Activated CD8-positive, alpha-beta memory T cell treated with anti-CD3 and anti-CD28 coated beads, Interleukin-2, amount 10 ng/mL, durations not matched to agents 7 days and 5 days (primary cell): ENCODE measurements at regions of chr11 and their contacts with region 1.

Region 1: GRCh38 chr11:6362873-6363678 is 27.2 kb upstream of the SMPD1 start:
- DNase-seq: peak; percentile 83
- ATAC-seq: peak; percentile 91
- H3K4me3 Mint-ChIP-seq: no peak overlapping the region
- H3K27ac Mint-ChIP-seq: no peak overlapping the region
- H3K4me1 Mint-ChIP-seq: no peaks in the 10 kb centered on the region
- H3K27me3 Mint-ChIP-seq: no peaks in the 10 kb centered on the region

Region 2: GRCh38 chr11:6234387-6235107 is 128.5 kb before region 1 on chr11 and contains the start of gene FHIP1B:
- CTCF ChIA-PET with region 1: interaction called, 10 read pairs
- DNase-seq: peak; percentile 100
- ATAC-seq: peak; percentile 94
- H3K4me3 Mint-ChIP-seq: peak within 1 kb of the TSS; percentile 92
- H3K27ac Mint-ChIP-seq: peak within 1 kb of the TSS; percentile 95
- H3K4me1 Mint-ChIP-seq: peaks cover 38% of the 10 kb centered on the region
- H3K27me3 Mint-ChIP-seq: no peaks in the 10 kb centered on the region
- total RNA-seq, gene FHIP1B: 17.3 to 19.9 TPM

Region 3: DNA sequence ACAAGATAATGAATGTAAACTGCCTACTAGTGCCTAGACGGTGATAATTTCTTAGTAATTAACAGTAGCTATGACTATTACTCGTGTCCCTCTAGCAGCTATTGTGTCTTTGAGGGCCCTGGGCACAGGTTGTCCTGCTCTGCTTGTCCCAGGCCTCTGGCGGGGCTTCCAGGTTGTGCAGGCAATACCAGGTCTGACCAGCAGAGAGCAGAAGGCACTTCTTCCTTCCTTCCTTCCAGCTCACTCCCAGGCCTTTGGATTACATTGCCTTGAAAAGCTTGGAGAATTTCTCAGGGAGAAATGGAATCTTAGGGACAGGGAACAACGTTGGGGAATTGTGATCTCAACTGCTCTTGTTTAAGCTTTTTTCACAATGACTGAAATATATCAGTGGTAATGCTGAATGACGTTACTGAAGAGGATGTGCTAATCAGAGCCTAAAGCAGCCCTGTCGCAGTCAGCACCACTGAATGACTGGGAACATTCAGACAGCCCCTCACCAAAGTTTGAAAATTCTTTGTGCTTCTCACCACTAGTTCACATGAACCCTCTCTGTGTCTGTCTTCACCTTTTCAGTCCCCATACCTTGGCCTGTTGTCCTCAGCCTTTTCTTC is 111.8 kb before region 1 on chr11:
- CTCF ChIA-PET with region 1: interaction called, 40 read pairs
- DNase-seq: peak; percentile 68
- ATAC-seq: peak; percentile 61
- H3K4me3 Mint-ChIP-seq: no peak overlapping the region
- H3K27ac Mint-ChIP-seq: no peak overlapping the region
- H3K4me1 Mint-ChIP-seq: no peaks in the 10 kb centered on the region
- H3K27me3 Mint-ChIP-seq: peaks cover 11% of the 10 kb centered on the region

Region 4: DNA sequence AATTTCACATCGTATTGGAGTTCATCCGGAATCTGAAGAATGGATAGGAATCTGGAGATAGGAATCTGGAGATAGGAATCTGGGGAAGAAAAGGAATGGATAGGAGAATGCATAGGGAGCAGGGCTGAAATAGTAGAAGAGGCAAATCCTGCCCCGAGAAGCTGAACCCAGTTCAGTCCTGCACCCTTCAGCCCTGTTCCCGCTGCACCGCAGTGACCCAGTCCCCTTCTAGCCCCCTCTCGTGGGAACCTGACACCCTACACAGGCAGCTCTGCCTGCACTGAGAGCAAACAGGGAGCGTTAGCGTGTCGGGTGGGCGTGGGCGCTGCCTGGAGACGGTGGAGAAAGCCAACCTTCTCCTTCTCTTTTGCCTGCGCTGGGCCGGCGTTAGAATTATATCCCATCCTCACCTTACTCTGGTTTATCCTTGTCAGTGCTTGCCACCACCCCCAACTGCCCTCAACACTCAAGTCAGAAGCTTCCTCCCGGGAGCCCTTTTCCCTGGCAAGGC is 104.5 kb before region 1 on chr11:
- CTCF ChIA-PET with region 1: interaction called, 10 read pairs
- DNase-seq: no peak
- ATAC-seq: no peak
- H3K4me3 Mint-ChIP-seq: no peak overlapping the region
- H3K27ac Mint-ChIP-seq: no peak overlapping the region
- H3K4me1 Mint-ChIP-seq: peaks cover 5% of the 10 kb centered on the region
- H3K27me3 Mint-ChIP-seq: peaks cover under 1% of the 10 kb centered on the region

Region 5: GRCh38 chr11:6298605-6299004 is 64.5 kb before region 1 on chr11:
- CTCF ChIA-PET with region 1: interaction called, 11 read pairs
- DNase-seq: peak; percentile 47
- ATAC-seq: peak; percentile 55
- H3K4me3 Mint-ChIP-seq: no peak overlapping the region
- H3K27ac Mint-ChIP-seq: no peak overlapping the region
- H3K4me1 Mint-ChIP-seq: no peaks in the 10 kb centered on the region
- H3K27me3 Mint-ChIP-seq: peaks cover 21% of the 10 kb centered on the region

Region 6: DNA sequence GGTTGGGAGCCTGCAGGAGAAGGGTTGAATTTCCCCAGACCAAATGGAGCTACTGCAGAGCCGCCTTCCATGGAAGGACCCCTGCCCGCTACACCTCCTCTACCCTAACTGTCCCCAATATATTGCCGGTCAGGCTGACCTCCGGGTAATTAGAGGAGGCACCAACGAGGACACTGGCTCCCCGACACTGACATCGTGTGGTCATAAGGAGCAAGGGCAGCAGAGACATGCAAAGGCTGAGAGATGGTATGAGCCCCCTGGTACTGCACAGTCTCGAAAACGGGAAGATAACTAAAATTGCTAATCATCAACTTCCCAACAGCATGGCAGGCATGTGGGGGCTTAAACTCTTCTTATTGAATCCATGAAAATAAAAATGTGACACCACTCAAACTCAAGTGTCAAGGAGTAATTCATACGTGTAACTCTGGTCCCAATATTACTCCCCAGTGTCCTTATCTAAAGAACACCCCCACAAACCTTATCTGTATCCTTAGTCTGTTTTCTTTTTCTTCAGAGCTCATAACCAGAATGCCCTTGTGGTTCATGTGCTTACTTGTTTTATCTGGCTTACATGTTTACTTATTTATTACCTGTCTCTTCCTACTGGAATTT is 47.2 kb before region 1 on chr11:
- CTCF ChIA-PET with region 1: interaction called, 14 read pairs
- DNase-seq: peak; percentile 55
- ATAC-seq: peak; percentile 55
- H3K4me3 Mint-ChIP-seq: no peak overlapping the region
- H3K27ac Mint-ChIP-seq: no peak overlapping the region
- H3K4me1 Mint-ChIP-seq: peaks cover 14% of the 10 kb centered on the region
- H3K27me3 Mint-ChIP-seq: peaks cover 61% of the 10 kb centered on the region